ENCODE measurements at regions of chr20 and their contacts with region 1.

Region 1: DNA sequence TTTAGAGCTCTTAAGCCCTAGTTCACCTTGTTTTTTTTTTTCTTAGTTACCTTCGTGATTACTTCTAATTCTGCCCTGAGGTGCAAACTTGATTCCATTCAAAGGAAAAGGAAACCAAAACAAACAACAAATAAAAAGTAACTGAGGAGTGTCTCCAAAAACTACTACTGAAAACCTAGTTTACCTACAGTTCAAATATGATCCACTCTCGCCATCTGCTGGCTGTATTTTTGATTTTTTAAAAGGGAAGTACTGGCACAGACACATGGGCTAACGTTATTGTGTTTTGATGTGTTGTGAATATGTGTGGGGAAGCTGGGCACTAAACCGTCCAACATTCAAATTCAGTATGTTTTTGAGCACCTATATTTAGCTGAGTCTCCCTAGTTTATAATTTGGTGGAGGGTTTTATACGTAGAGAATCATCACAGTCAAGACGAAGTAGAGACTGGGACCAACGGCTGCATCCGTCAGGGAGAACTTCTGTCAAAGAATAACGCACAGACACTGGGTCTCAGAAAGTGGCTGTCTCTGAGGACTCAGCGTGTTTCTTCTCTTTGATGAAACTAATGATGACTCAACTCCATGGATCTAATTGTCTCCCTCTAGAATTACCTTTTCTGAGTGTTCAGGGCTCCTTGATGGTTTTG is 373.5 kb upstream of the BTBD3 start:
- DNase-seq: peak in 2 of 5 donors; percentile 22 to 31
- ATAC-seq: peak; percentile 47 to 66 (median 60)
- H3K4me3 ChIP-seq: peak overlapping the region in 2 of 12 donors; percentile 22 to 25
- H3K27ac ChIP-seq: no peak overlapping the region
- H3K4me1 ChIP-seq: peaks cover 0 to 10% (median 0%) of the 10 kb centered on the region in 12 donors
- H3K27me3 ChIP-seq: no peaks in the 10 kb centered on the region
- CTCF ChIP-seq: peak; percentile 49 to 81 (median 66)
- POLR2A ChIP-seq: no peak

Region 2: GRCh38 chr20:9616833-9617489 is 1927.2 kb before region 1 on chr20:
- intact Hi-C with region 1: loop called in 9 of 10 experiments (anchors 2 to 10 kb)
- DNase-seq: peak in 4 of 5 donors; percentile 29 to 54 (median 42)
- ATAC-seq: peak in 2 of 4 donors; percentile 62 to 73
- H3K4me3 ChIP-seq: no peak overlapping the region
- H3K27ac ChIP-seq: no peak overlapping the region
- H3K4me1 ChIP-seq: peaks cover 0 to 5% (median 0%) of the 10 kb centered on the region in 12 donors
- H3K27me3 ChIP-seq: peaks cover 0 to 20% (median 3%) of the 10 kb centered on the region in 9 donors
- CTCF ChIP-seq: peak; percentile 72 to 90 (median 84)
- POLR2A ChIP-seq: no peak

Region 3: DNA sequence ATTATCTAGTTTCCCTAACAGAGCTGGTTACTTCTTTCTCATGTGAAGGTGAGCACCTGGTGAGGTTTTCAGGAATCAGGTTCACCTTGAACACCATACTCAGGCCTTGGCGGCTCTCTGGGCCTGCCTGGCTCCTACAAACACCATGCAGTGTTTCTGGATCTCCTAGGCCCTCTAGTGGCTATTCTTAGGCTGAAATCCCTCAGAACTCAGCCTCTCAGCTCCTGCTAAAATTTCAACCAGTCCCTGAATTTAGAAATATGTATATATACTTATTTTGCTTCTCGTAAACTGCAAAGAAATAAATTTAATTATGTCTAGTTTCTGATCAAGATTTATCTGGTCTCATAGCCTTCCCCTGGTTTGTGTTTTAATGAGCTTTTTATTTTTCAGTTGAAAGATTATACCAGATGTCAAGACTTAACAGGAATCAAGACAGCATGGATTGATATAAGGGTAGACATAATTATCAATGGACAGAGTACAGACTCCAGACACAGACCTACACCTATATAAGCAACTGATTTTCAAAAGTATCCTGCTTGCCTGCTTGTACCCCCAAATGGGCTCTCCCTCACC is 1453.5 kb before region 1 on chr20:
- intact Hi-C with region 1: loop called in 1 of 10 experiments (anchors 10 kb)
- DNase-seq: peak; percentile 22 to 49 (median 31)
- ATAC-seq: peak in 3 of 4 donors; percentile 69 to 81 (median 80)
- H3K4me3 ChIP-seq: no peak overlapping the region
- H3K27ac ChIP-seq: no peak overlapping the region
- H3K4me1 ChIP-seq: no peaks in the 10 kb centered on the region
- H3K27me3 ChIP-seq: no peaks in the 10 kb centered on the region
- CTCF ChIP-seq: peak; percentile 56 to 85 (median 72)
- POLR2A ChIP-seq: no peak

Region 4: DNA sequence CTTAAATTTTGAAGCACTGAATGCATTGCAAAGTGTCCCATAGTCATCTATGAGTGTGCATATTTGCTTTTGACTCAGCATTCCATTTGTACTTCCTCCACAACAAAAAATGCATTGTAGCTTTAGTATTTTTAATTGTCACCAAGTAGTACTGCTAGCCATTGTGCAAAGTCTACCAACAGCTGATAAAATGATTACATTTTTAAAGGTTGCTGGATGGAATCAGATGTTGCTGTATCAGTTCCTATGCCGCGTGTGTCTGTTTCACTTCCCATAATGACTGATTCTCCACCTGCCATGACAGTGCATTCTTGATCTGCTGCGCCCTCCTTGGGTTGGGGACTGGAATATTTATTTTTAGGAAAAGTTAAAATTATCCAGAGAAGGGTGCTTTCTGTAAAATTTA is 1067.8 kb before region 1 on chr20:
- intact Hi-C with region 1: loop called in 2 of 10 experiments (anchors 5 to 10 kb)
- DNase-seq: no peak
- ATAC-seq: peak in 3 of 4 donors; percentile 22 to 57 (median 52)
- H3K4me3 ChIP-seq: no peak overlapping the region
- H3K27ac ChIP-seq: peak overlapping the region in 1 of 12 donors; percentile 67
- H3K4me1 ChIP-seq: peaks cover 0 to 40% (median 12%) of the 10 kb centered on the region in 12 donors
- H3K27me3 ChIP-seq: no peaks in the 10 kb centered on the region
- CTCF ChIP-seq: no peak
- POLR2A ChIP-seq: no peak

Region 5: DNA sequence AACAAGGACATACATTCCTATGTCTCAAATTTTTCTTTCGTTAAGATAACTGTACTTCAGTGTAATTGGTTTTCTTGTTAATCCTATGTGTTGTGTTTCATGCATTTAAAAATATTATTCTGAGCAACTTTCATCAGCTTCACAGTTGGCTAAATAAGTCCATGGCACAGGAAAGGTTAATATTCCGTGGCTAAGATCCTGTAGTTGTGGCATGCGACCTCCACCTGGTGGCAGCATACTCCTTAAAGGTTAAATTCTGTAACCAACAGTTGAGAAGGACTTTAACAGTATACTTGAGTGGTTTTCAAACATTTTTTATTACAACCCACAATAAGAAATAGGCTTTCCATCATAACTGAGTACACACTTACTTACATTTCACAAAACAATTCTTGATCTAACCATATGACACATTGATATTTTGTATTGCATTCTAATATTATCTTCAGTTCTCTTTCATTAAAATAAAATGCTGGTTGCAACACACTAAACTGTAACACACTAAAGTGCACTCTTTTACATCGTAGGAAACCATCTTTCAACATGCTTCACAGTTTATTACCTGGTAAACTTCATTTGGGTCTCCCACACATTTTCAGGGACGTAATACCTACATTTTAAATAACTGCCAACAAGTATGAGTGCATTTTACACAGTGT is 990.7 kb before region 1 on chr20:
- intact Hi-C with region 1: loop called in 9 of 10 experiments (anchors 2 to 10 kb)
- DNase-seq: peak; percentile 42 to 76 (median 60)
- ATAC-seq: peak; percentile 61 to 83 (median 66)
- H3K4me3 ChIP-seq: no peak overlapping the region
- H3K27ac ChIP-seq: no peak overlapping the region
- H3K4me1 ChIP-seq: peaks cover 0 to 43% (median 0%) of the 10 kb centered on the region in 12 donors
- H3K27me3 ChIP-seq: no peaks in the 10 kb centered on the region
- CTCF ChIP-seq: peak; percentile 68 to 89 (median 84)
- POLR2A ChIP-seq: no peak

Region 6: DNA sequence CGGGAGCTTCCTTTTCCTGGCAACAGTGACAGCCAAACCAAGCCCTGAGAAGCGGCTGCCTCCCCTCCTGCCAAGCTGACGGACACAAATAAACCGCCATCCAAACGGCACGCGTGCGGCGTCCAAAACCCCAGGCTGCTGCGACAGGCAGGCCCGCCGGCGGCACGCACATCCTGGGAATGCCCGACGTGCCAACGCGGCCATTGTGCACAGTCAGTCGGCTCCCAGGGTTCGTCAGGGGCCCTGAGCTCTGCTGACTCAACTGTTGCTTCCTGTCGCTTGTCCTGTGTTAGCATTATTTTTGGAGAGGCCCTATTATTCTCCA is 877.1 kb before region 1 on chr20:
- intact Hi-C with region 1: loop called in 3 of 10 experiments (anchors 10 kb)
- DNase-seq: peak; percentile 52 to 75 (median 60)
- ATAC-seq: peak in 2 of 4 donors; percentile 5 to 21
- H3K4me3 ChIP-seq: peak overlapping the region in 9 of 12 donors; percentile 19 to 98 (median 34)
- H3K27ac ChIP-seq: peak overlapping the region in 11 of 12 donors; percentile 20 to 78 (median 63)
- H3K4me1 ChIP-seq: peaks cover 10 to 81% (median 60%) of the 10 kb centered on the region in 12 donors
- H3K27me3 ChIP-seq: no peaks in the 10 kb centered on the region
- CTCF ChIP-seq: no peak
- POLR2A ChIP-seq: no peak

Region 7: GRCh38 chr20:11287126-11287525 is 257.0 kb before region 1 on chr20:
- intact Hi-C with region 1: loop called in 1 of 10 experiments (anchors 10 kb)
- DNase-seq: no peak
- ATAC-seq: no peak
- H3K4me3 ChIP-seq: no peak overlapping the region
- H3K27ac ChIP-seq: no peak overlapping the region
- H3K4me1 ChIP-seq: no peaks in the 10 kb centered on the region
- H3K27me3 ChIP-seq: no peaks in the 10 kb centered on the region
- CTCF ChIP-seq: no peak
- POLR2A ChIP-seq: no peak